ENCODE measurements at regions of chr20 and their contacts with region 1.

Region 1: GRCh38 chr20:18481596-18481995 is 14.4 kb downstream of the POLR3F start:
- DNase-seq: no peak
- H3K4me3 ChIP-seq: no peak overlapping the region
- H3K27ac ChIP-seq: no peak overlapping the region
- H3K4me1 ChIP-seq: no peaks in the 10 kb centered on the region
- H3K27me3 ChIP-seq: no peaks in the 10 kb centered on the region
- CTCF ChIP-seq: no peak
- EP300 ChIP-seq: no peak
- POLR2A ChIP-seq: no peak

Region 2: GRCh38 chr20:18524646-18525045 is 43.0 kb after region 1 on chr20:
- in situ Hi-C with region 1: no loop called
- intact Hi-C with region 1: no loop called
- DNase-seq: no peak
- H3K4me3 ChIP-seq: no peak overlapping the region
- H3K27ac ChIP-seq: no peak overlapping the region
- H3K4me1 ChIP-seq: no peaks in the 10 kb centered on the region
- H3K27me3 ChIP-seq: no peaks in the 10 kb centered on the region
- CTCF ChIP-seq: no peak
- EP300 ChIP-seq: no peak
- POLR2A ChIP-seq: no peak

Region 3: DNA sequence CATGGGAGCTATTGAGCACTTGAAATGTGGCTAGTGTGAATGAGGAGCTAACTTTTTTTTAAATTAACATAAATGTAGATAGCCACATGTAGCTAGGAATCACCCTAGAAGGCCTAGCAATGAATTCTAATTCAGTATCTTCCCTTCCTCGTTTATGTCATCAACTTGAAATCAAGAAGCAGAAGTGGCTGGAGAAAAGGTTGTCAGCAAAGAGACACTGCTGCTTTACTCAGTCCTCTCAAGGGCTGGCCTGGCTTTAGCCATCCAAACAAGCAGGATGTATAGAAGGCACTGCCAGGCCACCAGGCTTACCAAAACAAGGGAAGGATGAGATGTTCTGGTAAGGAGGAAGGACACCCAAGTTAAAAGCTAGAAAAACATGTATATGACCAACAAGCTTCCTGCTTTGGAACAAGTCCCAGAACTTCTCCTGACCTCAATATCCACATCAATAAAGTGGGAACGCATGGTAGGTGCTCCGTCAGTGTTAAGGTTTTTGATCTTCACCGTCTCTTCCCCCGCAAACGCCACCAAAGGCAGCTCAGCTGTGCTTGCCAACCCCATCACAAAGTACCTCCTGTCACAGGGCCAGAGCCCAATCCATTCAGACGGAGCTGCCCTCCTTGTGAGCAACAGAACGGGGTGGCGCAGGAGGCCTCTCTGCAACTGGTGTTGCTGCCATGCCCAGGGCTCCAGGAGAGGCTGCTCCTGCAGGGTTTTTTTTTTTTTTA is 1040.6 kb after region 1 on chr20:
- in situ Hi-C with region 1: no loop called
- intact Hi-C with region 1: loop called (anchors 10 kb)
- DNase-seq: no peak
- H3K4me3 ChIP-seq: no peak overlapping the region
- H3K27ac ChIP-seq: no peak overlapping the region
- H3K4me1 ChIP-seq: peaks cover 0 to 3% (median 0%) of the 10 kb centered on the region in 4 donors
- H3K27me3 ChIP-seq: no peaks in the 10 kb centered on the region
- CTCF ChIP-seq: no peak
- EP300 ChIP-seq: no peak
- POLR2A ChIP-seq: no peak

Measured in transverse colon (tissue), 4 donors.